Caco-2 (cell line): ENCODE measurements at regions of chr7 and their contacts with region 1.

Region 1: DNA sequence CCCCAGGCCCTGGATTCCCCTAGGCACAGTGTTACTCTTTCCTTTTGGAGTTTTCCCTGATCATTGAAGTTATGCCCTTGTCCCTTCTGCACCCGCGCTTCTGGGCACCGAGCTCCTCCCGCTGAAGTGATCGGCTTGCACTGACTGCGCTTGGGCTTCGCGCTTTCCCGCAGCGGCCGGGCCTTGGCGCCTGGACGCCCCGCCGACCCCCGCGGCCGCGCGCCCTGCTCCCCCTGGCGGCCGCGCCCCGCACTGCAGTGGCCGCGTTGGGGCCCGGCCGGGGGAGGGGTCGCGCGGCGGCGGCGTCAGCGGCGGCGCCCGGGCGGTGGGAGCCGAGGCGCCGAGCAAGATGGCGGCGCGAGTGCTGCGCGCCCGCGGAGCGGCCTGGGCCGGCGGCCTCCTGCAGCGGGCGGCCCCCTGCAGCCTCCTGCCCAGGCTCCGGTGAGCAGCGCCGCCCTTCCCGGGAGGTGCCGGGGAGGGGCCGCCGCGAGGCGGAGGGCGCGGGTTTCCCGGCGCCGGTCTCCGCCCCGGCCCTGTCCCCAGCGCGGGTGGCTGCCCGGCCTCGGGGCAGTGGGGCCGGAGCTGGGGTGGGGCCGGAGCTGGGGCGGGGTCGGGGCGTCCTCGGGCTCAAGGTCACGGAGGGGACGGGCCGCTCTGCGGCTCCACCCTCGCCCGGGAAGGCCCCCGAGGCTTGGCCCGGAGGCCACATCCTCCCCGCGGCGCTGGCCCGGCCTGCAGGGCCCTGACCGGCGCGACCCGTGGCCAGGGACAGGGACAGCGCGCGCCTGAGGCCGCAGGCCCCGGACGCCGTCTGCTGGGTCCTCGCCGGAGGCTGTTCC is at the start of gene NIPSNAP2:
- DNase-seq: peak; percentile 86 to 91
- H3K4me3 ChIP-seq: peak within 1 kb of the TSS; percentile 46
- H3K4me3 Mint-ChIP-seq: peak within 1 kb of the TSS; percentile 82
- H3K27ac Mint-ChIP-seq: peak within 1 kb of the TSS; percentile 83
- H3K4me1 ChIP-seq: no peaks in the 10 kb centered on the region
- H3K4me1 Mint-ChIP-seq: no peaks in the 10 kb centered on the region
- H3K27me3 ChIP-seq: no peaks in the 10 kb centered on the region; the same call in 1 of the 2 replicates
- H3K27me3 Mint-ChIP-seq: peaks cover 4% of the 10 kb centered on the region
- CTCF ChIP-seq: peak; percentile 6 to 39
- total RNA-seq, gene NIPSNAP2: 59.3 and 63.4 TPM in 2 replicates

Region 2: GRCh38 chr7:55641273-55641691 is 323.2 kb before region 1 on chr7:
- CTCF ChIA-PET with region 1: interaction called, 6 read pairs
- POLR2A ChIA-PET with region 1: interaction called, 3 read pairs
- intact Hi-C with region 1: loop called (anchors 1 kb)
- DNase-seq: peak; percentile 54 to 59
- H3K4me3 ChIP-seq: no peak overlapping the region
- H3K4me3 Mint-ChIP-seq: no peak overlapping the region
- H3K27ac Mint-ChIP-seq: no peak overlapping the region
- H3K4me1 ChIP-seq: no peaks in the 10 kb centered on the region
- H3K4me1 Mint-ChIP-seq: no peaks in the 10 kb centered on the region
- H3K27me3 ChIP-seq: no peaks in the 10 kb centered on the region
- H3K27me3 Mint-ChIP-seq: peaks cover 3% of the 10 kb centered on the region
- CTCF ChIP-seq: peak; percentile 70 to 81

Region 3: GRCh38 chr7:55951637-55952351 is 12.7 kb before region 1 on chr7 and contains the start of gene MRPS17:
- CTCF ChIA-PET with region 1: interaction called, 3 read pairs
- POLR2A ChIA-PET with region 1: interaction called, 7 read pairs
- intact Hi-C with region 1: loop called (anchors 2 kb)
- DNase-seq: peak; percentile 96 to 97
- H3K4me3 ChIP-seq: peak within 1 kb of the TSS; percentile 84
- H3K4me3 Mint-ChIP-seq: peak within 1 kb of the TSS; percentile 97
- H3K27ac Mint-ChIP-seq: peak within 1 kb of the TSS; percentile 99
- H3K4me1 ChIP-seq: no peaks in the 10 kb centered on the region
- H3K4me1 Mint-ChIP-seq: no peaks in the 10 kb centered on the region
- H3K27me3 ChIP-seq: no peaks in the 10 kb centered on the region
- H3K27me3 Mint-ChIP-seq: no peaks in the 10 kb centered on the region
- CTCF ChIP-seq: no peak
- total RNA-seq, gene MRPS17: 18.9 and 22.7 TPM in 2 replicates

Region 4: DNA sequence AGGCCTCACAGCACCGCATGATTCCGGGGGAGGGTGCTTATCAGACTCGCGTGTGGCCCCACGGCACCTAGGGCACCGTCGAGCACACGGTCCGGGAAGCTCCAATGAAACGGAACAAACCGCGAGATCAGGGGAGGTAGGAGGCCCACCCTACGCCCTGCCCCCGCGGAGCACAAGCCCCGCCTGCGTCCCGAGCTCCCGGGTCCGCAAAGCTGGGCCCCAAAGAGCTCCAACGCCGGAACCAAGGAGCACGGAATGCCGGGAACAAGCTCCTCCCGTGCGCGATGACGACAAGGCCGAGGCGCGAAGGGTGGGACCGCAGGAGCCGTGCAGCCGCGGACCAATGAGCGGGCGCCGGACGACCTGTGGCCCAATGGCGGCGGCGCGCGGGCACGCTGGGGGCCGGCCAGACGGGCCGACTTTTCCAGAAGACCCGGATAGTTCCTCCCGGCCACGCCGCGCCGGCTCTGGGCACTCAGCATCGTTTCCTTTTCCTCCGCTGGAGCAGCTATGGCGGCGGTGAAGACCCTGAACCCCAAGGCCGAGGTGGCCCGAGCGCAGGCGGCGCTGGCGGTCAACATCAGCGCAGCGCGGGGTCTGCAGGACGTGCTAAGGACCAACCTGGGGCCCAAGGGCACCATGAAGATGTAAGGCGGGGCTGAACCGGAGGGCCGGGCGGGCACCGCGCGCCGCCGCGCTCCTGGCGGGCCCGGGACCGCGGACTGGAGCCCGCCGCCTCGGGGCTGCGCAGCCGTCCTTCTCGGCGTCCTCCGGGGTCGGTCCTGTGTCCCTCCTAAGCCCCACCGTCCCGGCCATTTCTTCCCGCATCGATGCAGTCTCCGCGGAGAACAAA is 87.1 kb after region 1 on chr7 and contains the starts of genes CCT6A and PSPH:
- CTCF ChIA-PET with region 1: interaction called, 4 read pairs
- POLR2A ChIA-PET with region 1: interaction called, 13 read pairs
- intact Hi-C with region 1: no loop called
- DNase-seq: peak; percentile 99
- H3K4me3 ChIP-seq: peak within 1 kb of the TSS; percentile 59
- H3K4me3 Mint-ChIP-seq: peak within 1 kb of the TSS; percentile 92
- H3K27ac Mint-ChIP-seq: peak within 1 kb of the TSS; percentile 91
- H3K4me1 ChIP-seq: peaks cover 45% of the 10 kb centered on the region
- H3K4me1 Mint-ChIP-seq: peaks cover 4% of the 10 kb centered on the region
- H3K27me3 ChIP-seq: no peaks in the 10 kb centered on the region
- H3K27me3 Mint-ChIP-seq: no peaks in the 10 kb centered on the region
- CTCF ChIP-seq: no peak
- total RNA-seq, gene CCT6A: 242 and 248 TPM in 2 replicates
- total RNA-seq, gene PSPH: 107 and 111 TPM in 2 replicates